WTC11 (cell line): ENCODE measurements at regions of chr17 and their contacts with region 1.

Region 1: DNA sequence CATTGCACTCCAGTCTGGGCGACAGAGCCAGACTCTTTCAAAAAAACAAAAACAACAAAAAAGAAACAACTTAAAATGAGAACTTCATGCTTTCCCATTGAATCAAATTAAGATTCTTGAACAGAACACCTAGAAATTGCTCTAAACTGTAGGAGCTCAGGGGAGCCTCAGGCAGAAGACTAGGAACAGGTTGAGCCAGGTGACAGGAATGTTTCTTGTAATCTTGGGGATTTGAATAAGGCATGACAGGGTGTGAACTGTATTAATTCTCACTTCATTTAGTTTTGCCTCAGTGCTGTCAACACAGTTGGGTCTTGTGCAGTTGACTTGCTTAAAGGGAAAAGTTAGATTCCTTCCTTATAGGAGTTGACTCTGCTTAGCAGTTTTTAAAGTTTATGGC is 27.8 kb downstream of the SOCS7 start:
- DNase-seq: no peak
- ATAC-seq: no peak
- H3K4me3 Mint-ChIP-seq: no peak overlapping the region
- H3K27ac Mint-ChIP-seq: no peak overlapping the region
- H3K4me1 Mint-ChIP-seq: no peaks in the 10 kb centered on the region
- H3K27me3 Mint-ChIP-seq: no peaks in the 10 kb centered on the region
- CTCF ChIP-seq: no peak

Region 2: DNA sequence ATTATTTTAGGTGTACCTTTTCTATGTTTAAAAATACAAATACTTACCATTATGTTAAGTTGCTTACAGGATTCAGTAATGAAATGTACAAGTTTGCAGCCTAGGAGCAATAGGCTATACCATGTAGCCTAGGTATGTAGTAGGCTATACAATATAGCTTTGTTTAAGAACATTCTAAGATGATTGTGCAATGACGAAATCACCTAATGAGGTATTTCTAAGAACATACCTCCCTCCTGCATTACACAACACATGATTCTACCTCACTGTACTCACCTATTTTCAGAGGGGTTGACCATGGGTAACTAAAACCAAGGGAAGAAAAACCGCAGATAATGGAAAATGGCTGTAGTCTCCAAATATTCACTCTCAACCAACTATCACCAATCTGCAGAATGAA is 490.6 kb before region 1 on chr17:
- CTCF ChIA-PET with region 1: no interaction called
- POLR2A ChIA-PET with region 1: no interaction called
- DNase-seq: no peak
- ATAC-seq: no peak
- H3K4me3 Mint-ChIP-seq: no peak overlapping the region
- H3K27ac Mint-ChIP-seq: no peak overlapping the region
- H3K4me1 Mint-ChIP-seq: peaks cover 10% of the 10 kb centered on the region
- H3K27me3 Mint-ChIP-seq: no peaks in the 10 kb centered on the region; the same call in 1 of the 2 replicates
- CTCF ChIP-seq: no peak

Region 3: DNA sequence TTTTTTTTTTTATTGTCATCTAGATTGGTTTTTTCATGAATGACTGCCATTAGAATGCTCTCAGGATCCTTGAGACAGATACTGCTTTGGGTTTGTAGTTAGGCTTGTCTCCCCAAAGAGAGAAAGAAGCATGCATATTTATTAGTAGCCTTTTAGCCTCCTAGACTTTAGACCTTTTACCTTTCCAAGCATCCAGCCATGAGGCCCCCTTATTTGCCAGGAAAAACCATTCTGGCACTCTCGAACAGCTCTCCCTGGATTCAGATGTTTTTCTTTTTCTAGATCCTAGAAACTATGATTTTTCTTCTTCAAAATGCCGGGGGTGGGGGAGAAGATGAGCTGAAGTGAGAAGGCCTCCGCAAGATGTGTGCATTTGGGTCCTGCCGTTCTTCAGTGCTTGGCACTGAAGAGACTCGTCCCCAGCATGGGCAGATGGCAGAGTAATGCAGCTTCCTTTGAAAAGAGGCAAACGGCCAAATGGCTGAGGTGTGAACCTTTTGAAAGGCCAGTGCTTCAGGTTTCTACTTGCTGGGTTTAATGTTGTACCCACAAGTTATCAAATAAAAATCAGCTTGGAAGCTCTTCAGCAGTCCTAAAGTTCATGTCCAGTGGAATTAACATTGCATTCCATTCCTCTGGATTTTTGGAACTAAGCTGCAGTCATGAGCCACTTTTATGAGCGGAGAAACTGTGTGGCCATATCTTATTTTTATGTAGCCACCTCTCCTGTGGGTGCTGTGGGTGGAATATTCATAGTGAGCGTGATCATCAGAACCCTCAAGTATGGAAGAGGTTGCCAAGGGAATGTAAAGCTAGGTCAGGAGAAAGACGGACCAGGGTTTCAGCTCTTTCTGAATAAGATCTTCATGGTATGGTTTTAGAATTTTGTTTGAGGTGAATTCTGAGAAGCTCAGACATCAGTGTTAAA is 20.6 kb before region 1 on chr17:
- CTCF ChIA-PET with region 1: interaction called, 10 read pairs
- POLR2A ChIA-PET with region 1: no interaction called
- DNase-seq: no peak
- ATAC-seq: no peak
- H3K4me3 Mint-ChIP-seq: no peak overlapping the region
- H3K27ac Mint-ChIP-seq: peak overlapping the region; percentile 46; the same call in 1 of the 2 replicates
- H3K4me1 Mint-ChIP-seq: peaks cover 61% of the 10 kb centered on the region
- H3K27me3 Mint-ChIP-seq: no peaks in the 10 kb centered on the region
- CTCF ChIP-seq: no peak

Region 4: DNA sequence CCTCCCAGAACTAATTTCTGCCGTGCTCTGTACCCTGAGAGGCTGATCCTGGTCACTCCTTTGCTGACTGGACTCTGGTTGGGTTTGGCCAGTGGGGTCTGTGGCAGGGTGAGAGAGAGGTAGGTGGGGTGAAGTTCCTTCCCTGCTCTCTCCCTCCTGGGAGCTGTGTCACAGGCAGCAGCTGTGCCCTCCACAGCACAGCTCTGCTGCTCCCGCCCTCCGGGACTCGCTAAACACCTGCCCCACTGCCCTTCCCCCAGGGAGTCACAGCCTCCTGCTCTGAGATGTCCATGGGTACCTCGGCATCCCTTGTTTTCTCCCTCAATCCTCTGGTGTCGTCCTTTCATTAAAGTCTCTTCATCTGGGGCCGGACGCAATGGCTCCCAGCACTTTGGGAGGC is 159.9 kb after region 1 on chr17:
- CTCF ChIA-PET with region 1: no interaction called
- POLR2A ChIA-PET with region 1: no interaction called
- DNase-seq: no peak
- ATAC-seq: no peak
- H3K4me3 Mint-ChIP-seq: no peak overlapping the region
- H3K27ac Mint-ChIP-seq: no peak overlapping the region
- H3K4me1 Mint-ChIP-seq: peaks cover 19% of the 10 kb centered on the region
- H3K27me3 Mint-ChIP-seq: peaks cover 27% of the 10 kb centered on the region
- CTCF ChIP-seq: no peak